MCF 10A (cell line): ENCODE measurements at regions of chr4 and their contacts with region 1.

Region 1: GRCh38 chr4:742742-743311 is 37.2 kb downstream of the PCGF3 start:
- DNase-seq: peak; percentile 71
- H3K4me3 Mint-ChIP-seq: no peak overlapping the region
- H3K27ac Mint-ChIP-seq: no peak overlapping the region
- H3K4me1 Mint-ChIP-seq: peaks cover 11% of the 10 kb centered on the region
- H3K27me3 Mint-ChIP-seq: no peaks in the 10 kb centered on the region
- CTCF ChIP-seq: peak; percentile 95

Region 2: GRCh38 chr4:729336-730315 is 13.2 kb before region 1 on chr4:
- CTCF ChIA-PET with region 1: interaction called, 10 read pairs
- POLR2A ChIA-PET with region 1: interaction called, 3 read pairs
- intact Hi-C with region 1: no loop called
- DNase-seq: no peak
- H3K4me3 Mint-ChIP-seq: no peak overlapping the region
- H3K27ac Mint-ChIP-seq: no peak overlapping the region
- H3K4me1 Mint-ChIP-seq: peaks cover 5% of the 10 kb centered on the region
- H3K27me3 Mint-ChIP-seq: no peaks in the 10 kb centered on the region
- CTCF ChIP-seq: no peak

Region 3: DNA sequence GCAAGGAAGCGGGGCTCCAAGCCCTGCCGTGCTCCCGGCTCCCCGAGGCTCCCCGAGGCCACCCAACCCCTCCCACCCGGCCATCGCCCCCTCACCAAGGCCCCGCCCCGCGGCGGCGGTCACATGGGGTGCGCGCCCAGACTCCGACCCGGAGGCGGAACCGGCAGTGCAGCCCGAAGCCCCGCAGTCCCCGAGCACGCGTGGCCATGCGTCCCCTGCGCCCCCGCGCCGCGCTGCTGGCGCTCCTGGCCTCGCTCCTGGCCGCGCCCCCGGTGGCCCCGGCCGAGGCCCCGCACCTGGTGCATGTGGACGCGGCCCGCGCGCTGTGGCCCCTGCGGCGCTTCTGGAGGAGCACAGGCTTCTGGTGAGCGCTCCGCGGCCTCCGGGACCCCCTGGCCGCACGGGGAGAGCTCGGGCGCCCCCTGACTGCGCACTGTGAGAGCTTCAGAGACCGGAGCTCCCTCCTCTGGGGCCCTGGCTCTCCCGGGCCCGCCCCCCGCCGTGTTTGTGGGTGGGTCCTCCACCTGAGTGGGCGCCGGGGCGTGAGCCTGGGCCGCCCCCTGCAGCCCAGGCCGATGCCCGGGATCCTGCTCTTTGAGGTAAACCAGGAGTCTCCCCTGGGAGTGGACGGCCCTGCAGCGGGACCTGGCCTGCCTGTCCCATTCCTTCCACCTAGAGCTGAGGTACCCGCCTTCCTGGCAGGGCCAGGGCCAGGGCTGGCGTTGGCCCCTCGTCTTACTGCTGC is 244.2 kb after region 1 on chr4 and contains the start of gene IDUA:
- CTCF ChIA-PET with region 1: interaction called, 4 read pairs
- POLR2A ChIA-PET with region 1: no interaction called
- intact Hi-C with region 1: loop called (anchors 2 kb)
- DNase-seq: peak; percentile 71
- H3K4me3 Mint-ChIP-seq: peak within 1 kb of the TSS; percentile 84
- H3K27ac Mint-ChIP-seq: no peak within 1 kb of the TSS
- H3K4me1 Mint-ChIP-seq: no peaks in the 10 kb centered on the region
- H3K27me3 Mint-ChIP-seq: no peaks in the 10 kb centered on the region
- CTCF ChIP-seq: peak; percentile 40
- total RNA-seq, gene IDUA: 35.0 and 35.1 TPM in 2 replicates